ENCODE measurements at regions of chr4 and their contacts with region 1.

Region 1: GRCh38 chr4:87848622-87849351 is 16.0 kb downstream of the MEPE start:
- DNase-seq: peak; percentile 29
- H3K4me3 ChIP-seq: peak overlapping the region in 1 of 4 donors; percentile 14
- H3K27ac ChIP-seq: peak overlapping the region in 1 of 4 donors; percentile 7
- H3K4me1 ChIP-seq: peaks cover 0 to 9% (median 3%) of the 10 kb centered on the region in 4 donors
- H3K27me3 ChIP-seq: no peaks in the 10 kb centered on the region
- CTCF ChIP-seq: peak; percentile 39 to 54 (median 49)
- EP300 ChIP-seq: no peak
- POLR2A ChIP-seq: no peak

Region 2: GRCh38 chr4:87353592-87353991 is 495.2 kb before region 1 on chr4:
- in situ Hi-C with region 1: loop called in 1 of 4 experiments (anchors 25 kb)
- intact Hi-C with region 1: no loop called
- DNase-seq: no peak
- H3K4me3 ChIP-seq: no peak overlapping the region
- H3K27ac ChIP-seq: peak overlapping the region in 1 of 4 donors; percentile 67
- H3K4me1 ChIP-seq: peaks cover 0 to 5% (median 2%) of the 10 kb centered on the region in 4 donors
- H3K27me3 ChIP-seq: no peaks in the 10 kb centered on the region
- CTCF ChIP-seq: peak; percentile 9 to 52 (median 30)
- EP300 ChIP-seq: no peak
- POLR2A ChIP-seq: no peak

Region 3: DNA sequence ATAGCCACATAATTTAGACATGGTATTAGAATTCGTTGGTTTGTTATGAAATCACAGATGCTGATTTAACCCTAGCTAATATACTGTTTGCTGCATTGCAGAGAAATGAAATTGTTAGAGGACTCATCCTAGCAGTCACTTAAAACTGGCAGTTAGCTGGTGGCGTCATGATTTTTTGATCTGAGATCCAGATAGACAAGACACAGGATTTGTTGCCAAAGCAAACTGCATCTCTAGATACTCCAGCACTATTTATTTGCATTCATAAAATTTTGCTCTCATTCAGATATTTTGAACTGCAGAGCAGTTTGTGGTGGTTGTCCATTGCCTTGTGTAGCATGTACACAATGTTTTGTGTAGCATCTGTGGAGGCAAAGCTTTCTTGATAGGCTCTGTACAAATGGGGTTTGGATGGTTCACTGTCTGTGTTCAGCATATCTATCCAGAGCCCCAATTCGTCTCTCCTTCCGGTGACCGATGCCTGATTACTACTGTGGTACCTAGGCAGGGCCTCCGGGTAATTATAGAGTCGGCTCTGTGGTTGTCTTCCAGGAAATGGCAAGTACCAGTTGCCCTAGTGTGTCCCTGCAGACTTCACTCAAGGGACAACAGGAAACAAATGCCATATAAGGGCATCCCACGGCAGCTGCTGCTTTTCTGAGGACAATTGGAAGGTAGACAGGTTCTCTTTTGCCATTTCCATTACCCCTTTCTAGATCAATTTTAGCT is 289.5 kb before region 1 on chr4:
- in situ Hi-C with region 1: loop called in 1 of 4 experiments (anchors 25 kb)
- intact Hi-C with region 1: no loop called
- DNase-seq: peak; percentile 17
- H3K4me3 ChIP-seq: no peak overlapping the region
- H3K27ac ChIP-seq: no peak overlapping the region
- H3K4me1 ChIP-seq: no peaks in the 10 kb centered on the region
- H3K27me3 ChIP-seq: no peaks in the 10 kb centered on the region
- CTCF ChIP-seq: no peak
- EP300 ChIP-seq: no peak
- POLR2A ChIP-seq: no peak

Region 4: GRCh38 chr4:87973283-87974169 is 124.7 kb after region 1 on chr4:
- in situ Hi-C with region 1: loop called in 3 of 4 experiments (anchors 5 to 10 kb)
- intact Hi-C with region 1: no loop called
- DNase-seq: peak; percentile 30
- H3K4me3 ChIP-seq: no peak overlapping the region
- H3K27ac ChIP-seq: no peak overlapping the region
- H3K4me1 ChIP-seq: peaks cover 0 to 6% (median 0%) of the 10 kb centered on the region in 4 donors
- H3K27me3 ChIP-seq: peaks cover 41% of the 10 kb centered on the region
- CTCF ChIP-seq: peak; percentile 55 to 82 (median 73)
- EP300 ChIP-seq: no peak
- POLR2A ChIP-seq: no peak

Region 5: GRCh38 chr4:88503344-88503743 is 654.6 kb after region 1 on chr4:
- in situ Hi-C with region 1: loop called in 1 of 4 experiments (anchors 10 kb)
- intact Hi-C with region 1: loop called (anchors 10 kb)
- DNase-seq: no peak
- H3K4me3 ChIP-seq: no peak overlapping the region
- H3K27ac ChIP-seq: no peak overlapping the region
- H3K4me1 ChIP-seq: no peaks in the 10 kb centered on the region
- H3K27me3 ChIP-seq: no peaks in the 10 kb centered on the region
- CTCF ChIP-seq: no peak
- EP300 ChIP-seq: no peak
- POLR2A ChIP-seq: no peak

Region 6: GRCh38 chr4:88786011-88786410 is 937.2 kb after region 1 on chr4:
- in situ Hi-C with region 1: no loop called
- intact Hi-C with region 1: no loop called
- DNase-seq: no peak
- H3K4me3 ChIP-seq: no peak overlapping the region
- H3K27ac ChIP-seq: no peak overlapping the region
- H3K4me1 ChIP-seq: no peaks in the 10 kb centered on the region
- H3K27me3 ChIP-seq: no peaks in the 10 kb centered on the region
- CTCF ChIP-seq: no peak
- EP300 ChIP-seq: no peak
- POLR2A ChIP-seq: no peak

Measured in transverse colon (tissue), 4 donors.